ENCODE measurements at regions of chr1 and their contacts with region 1.

Region 1: GRCh38 chr1:109532365-109533136 is 7.1 kb upstream of the GPR61 start:
- DNase-seq: peak; percentile 85
- ATAC-seq: peak; percentile 92 to 94
- H3K4me3 ChIP-seq: peak overlapping the region; percentile 16
- H3K27ac ChIP-seq: peak overlapping the region; percentile 56
- H3K4me1 ChIP-seq: peaks cover 12% of the 10 kb centered on the region
- H3K27me3 ChIP-seq: no peaks in the 10 kb centered on the region
- CTCF ChIP-seq: peak; percentile 94

Region 2: GRCh38 chr1:109499661-109500536 is 32.7 kb before region 1 on chr1:
- intact Hi-C with region 1: loop called (anchors 5 kb)
- DNase-seq: peak; percentile 68
- ATAC-seq: peak; percentile 61 to 71
- H3K4me3 ChIP-seq: no peak overlapping the region
- H3K27ac ChIP-seq: peak overlapping the region; percentile 22
- H3K4me1 ChIP-seq: peaks cover 51% of the 10 kb centered on the region
- H3K27me3 ChIP-seq: no peaks in the 10 kb centered on the region
- CTCF ChIP-seq: peak; percentile 46

Region 3: GRCh38 chr1:109595531-109595930 is 63.0 kb after region 1 on chr1:
- intact Hi-C with region 1: no loop called
- DNase-seq: no peak
- ATAC-seq: no peak
- H3K4me3 ChIP-seq: no peak overlapping the region
- H3K27ac ChIP-seq: no peak overlapping the region
- H3K4me1 ChIP-seq: no peaks in the 10 kb centered on the region
- H3K27me3 ChIP-seq: no peaks in the 10 kb centered on the region
- CTCF ChIP-seq: no peak

Region 4: GRCh38 chr1:109620841-109621286 is 88.3 kb after region 1 on chr1:
- intact Hi-C with region 1: no loop called
- DNase-seq: peak; percentile 97
- ATAC-seq: peak; percentile 86 to 87
- H3K4me3 ChIP-seq: peak overlapping the region; percentile 85
- H3K27ac ChIP-seq: peak overlapping the region; percentile 87
- H3K4me1 ChIP-seq: peaks cover 68% of the 10 kb centered on the region
- H3K27me3 ChIP-seq: no peaks in the 10 kb centered on the region
- CTCF ChIP-seq: no peak

Region 5: DNA sequence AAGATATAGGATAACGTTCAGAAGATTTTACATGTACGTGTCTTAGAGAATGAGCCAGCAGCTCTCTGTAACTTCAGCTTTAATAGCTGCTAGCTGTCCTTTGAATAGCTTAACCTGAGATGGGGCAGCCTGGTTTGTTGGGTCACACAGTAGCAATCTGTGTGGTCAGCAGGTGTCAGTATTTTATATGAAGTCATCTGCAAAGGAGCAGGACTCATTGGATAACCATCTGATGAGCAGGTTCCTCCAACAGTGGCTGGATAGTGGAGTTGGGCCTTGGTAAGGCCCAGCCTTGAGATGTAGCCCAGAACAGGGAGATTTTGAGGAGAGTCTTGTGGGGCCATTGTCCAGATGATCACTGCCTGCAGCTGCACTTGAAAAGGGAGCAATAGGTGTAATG is 185.9 kb after region 1 on chr1:
- intact Hi-C with region 1: no loop called
- DNase-seq: no peak
- ATAC-seq: no peak
- H3K4me3 ChIP-seq: no peak overlapping the region
- H3K27ac ChIP-seq: no peak overlapping the region
- H3K4me1 ChIP-seq: no peaks in the 10 kb centered on the region
- H3K27me3 ChIP-seq: no peaks in the 10 kb centered on the region
- CTCF ChIP-seq: no peak

Region 6: GRCh38 chr1:109790735-109791494 is 258.4 kb after region 1 on chr1:
- intact Hi-C with region 1: no loop called
- DNase-seq: peak; percentile 74
- ATAC-seq: peak; percentile 47 to 72
- H3K4me3 ChIP-seq: no peak overlapping the region
- H3K27ac ChIP-seq: peak overlapping the region; percentile 72
- H3K4me1 ChIP-seq: peaks cover 74% of the 10 kb centered on the region
- H3K27me3 ChIP-seq: no peaks in the 10 kb centered on the region
- CTCF ChIP-seq: peak; percentile 55

Measured in lower lobe of right lung (tissue), 2 donors.